ENCODE measurements at regions of chr5 and their contacts with region 1.

Region 1: DNA sequence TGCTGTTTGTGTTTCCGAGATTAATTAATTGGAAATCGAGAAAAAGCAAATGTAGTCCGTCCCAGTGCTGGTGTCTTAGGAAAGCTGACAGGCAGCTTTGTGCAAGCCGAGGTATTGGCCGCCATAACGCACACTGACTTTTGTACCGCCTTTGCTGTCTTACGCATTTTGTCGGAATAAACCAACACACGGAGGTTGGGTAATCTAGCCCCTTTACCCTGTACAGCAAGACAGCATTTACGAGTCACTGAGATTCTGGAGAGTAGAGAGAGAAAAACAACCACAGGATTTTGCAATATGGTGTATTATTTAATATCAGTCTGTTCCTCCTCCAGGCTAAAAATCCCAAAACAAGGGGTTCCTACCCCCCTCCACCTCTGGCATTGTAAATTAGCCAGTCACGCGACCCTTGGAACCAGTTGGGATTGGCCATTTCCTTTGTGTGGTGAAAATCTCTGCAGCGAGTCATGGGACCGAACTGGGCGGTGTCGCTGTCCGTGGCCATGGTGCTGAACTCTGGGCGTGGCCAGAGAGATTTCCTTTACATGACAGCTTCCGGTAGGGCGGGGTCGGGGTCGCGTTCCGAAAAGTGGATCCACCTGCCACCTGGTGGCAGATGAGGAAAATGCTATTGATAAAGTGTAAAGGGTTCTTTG is 10.3 kb upstream of the PCDHB1 start:
- DNase-seq: peak; percentile 87
- H3K4me3 ChIP-seq: peak overlapping the region; percentile 60 to 66
- H3K27ac ChIP-seq: peak overlapping the region; percentile 25 to 90; a peak in 3 of 4 replicates
- H3K4me1 ChIP-seq: peaks cover 0 to 7% of the 10 kb centered on the region in 2 experiments; a peak in 2 of 4 replicates
- H3K27me3 ChIP-seq: no peaks in the 10 kb centered on the region
- CTCF ChIP-seq: peak; percentile 84
- EP300 ChIP-seq: no peak
- RAD21 ChIP-seq: peak; percentile 95

Region 2: GRCh38 chr5:140785905-140786686 is 254.8 kb before region 1 on chr5 and contains the start of gene PCDHA1:
- CTCF ChIA-PET with region 1: interaction called, 17 read pairs
- POLR2A ChIA-PET with region 1: no interaction called
- DNase-seq: peak; percentile 36
- H3K4me3 ChIP-seq: peak within 1 kb of the TSS in 1 of 2 experiments; percentile 31; a peak in 2 of 4 replicates
- H3K27ac ChIP-seq: no peak within 1 kb of the TSS
- H3K4me1 ChIP-seq: no peaks in the 10 kb centered on the region
- H3K27me3 ChIP-seq: no peaks in the 10 kb centered on the region
- CTCF ChIP-seq: peak; percentile 29
- EP300 ChIP-seq: no peak
- RAD21 ChIP-seq: peak; percentile 47
- polyA plus RNA-seq, gene PCDHA1: 0.16 and 0.21 TPM in 2 replicates

Region 3: GRCh38 chr5:140855772-140856674 is 184.9 kb before region 1 on chr5 and contains the start of gene PCDHA10:
- CTCF ChIA-PET with region 1: interaction called, 63 read pairs
- POLR2A ChIA-PET with region 1: no interaction called
- DNase-seq: no peak
- H3K4me3 ChIP-seq: no peak within 1 kb of the TSS
- H3K27ac ChIP-seq: no peak within 1 kb of the TSS
- H3K4me1 ChIP-seq: no peaks in the 10 kb centered on the region
- H3K27me3 ChIP-seq: no peaks in the 10 kb centered on the region
- CTCF ChIP-seq: peak; percentile 13; the same call in 1 of the 2 replicates
- EP300 ChIP-seq: no peak
- RAD21 ChIP-seq: peak; percentile 40; the same call in 1 of the 2 replicates
- polyA plus RNA-seq, gene PCDHA10: 0.02 TPM in 2 replicates

Region 4: GRCh38 chr5:140875066-140876065 is 165.5 kb before region 1 on chr5 and contains the start of gene PCDHA12:
- CTCF ChIA-PET with region 1: interaction called, 89 read pairs
- POLR2A ChIA-PET with region 1: interaction called, 15 read pairs
- DNase-seq: peak; percentile 70
- H3K4me3 ChIP-seq: peak within 1 kb of the TSS; percentile 56 to 64
- H3K27ac ChIP-seq: peak within 1 kb of the TSS in 1 of 2 experiments; percentile 50; a peak in 2 of 4 replicates
- H3K4me1 ChIP-seq: no peaks in the 10 kb centered on the region; a peak in 2 of 4 replicates
- H3K27me3 ChIP-seq: no peaks in the 10 kb centered on the region
- CTCF ChIP-seq: peak; percentile 62
- EP300 ChIP-seq: no peak
- RAD21 ChIP-seq: peak; percentile 84
- polyA plus RNA-seq, gene PCDHA12: 0.54 and 0.70 TPM in 2 replicates

Region 5: GRCh38 chr5:140953234-140953633 is 87.7 kb before region 1 on chr5:
- CTCF ChIA-PET with region 1: interaction called, 13 read pairs
- POLR2A ChIA-PET with region 1: no interaction called
- DNase-seq: no peak
- H3K4me3 ChIP-seq: no peak overlapping the region
- H3K27ac ChIP-seq: no peak overlapping the region
- H3K4me1 ChIP-seq: no peaks in the 10 kb centered on the region
- H3K27me3 ChIP-seq: no peaks in the 10 kb centered on the region
- CTCF ChIP-seq: no peak
- EP300 ChIP-seq: no peak
- RAD21 ChIP-seq: no peak

Region 6: GRCh38 chr5:140982083-140982716 is 58.7 kb before region 1 on chr5:
- CTCF ChIA-PET with region 1: interaction called, 20 read pairs
- POLR2A ChIA-PET with region 1: interaction called, 4 read pairs
- DNase-seq: peak; percentile 47
- H3K4me3 ChIP-seq: no peak overlapping the region
- H3K27ac ChIP-seq: peak overlapping the region in 1 of 2 experiments; percentile 96; a peak in 2 of 4 replicates
- H3K4me1 ChIP-seq: peaks cover 9 to 31% of the 10 kb centered on the region in 2 experiments; a peak in 3 of 4 replicates
- H3K27me3 ChIP-seq: no peaks in the 10 kb centered on the region
- CTCF ChIP-seq: no peak
- EP300 ChIP-seq: peak in 1 of 2 experiments; percentile 80; a peak in 2 of 4 replicates
- RAD21 ChIP-seq: peak; percentile 41; the same call in 1 of the 2 replicates

Region 7: GRCh38 chr5:141017943-141018342 is 23.0 kb before region 1 on chr5:
- CTCF ChIA-PET with region 1: interaction called, 15 read pairs
- POLR2A ChIA-PET with region 1: interaction called, 3 read pairs
- DNase-seq: no peak
- H3K4me3 ChIP-seq: no peak overlapping the region
- H3K27ac ChIP-seq: no peak overlapping the region
- H3K4me1 ChIP-seq: no peaks in the 10 kb centered on the region
- H3K27me3 ChIP-seq: no peaks in the 10 kb centered on the region
- CTCF ChIP-seq: no peak
- EP300 ChIP-seq: no peak
- RAD21 ChIP-seq: no peak

Region 8: GRCh38 chr5:141121563-141121962 is 80.7 kb after region 1 on chr5 and contains the start of gene PCDHB4:
- CTCF ChIA-PET with region 1: no interaction called
- POLR2A ChIA-PET with region 1: no interaction called
- DNase-seq: peak; percentile 49
- H3K4me3 ChIP-seq: peak within 1 kb of the TSS; percentile 38 to 41
- H3K27ac ChIP-seq: no peak within 1 kb of the TSS; a peak in 1 of 4 replicates
- H3K4me1 ChIP-seq: peaks cover 0 to 2% of the 10 kb centered on the region in 2 experiments; a peak in 1 of 4 replicates
- H3K27me3 ChIP-seq: no peaks in the 10 kb centered on the region
- CTCF ChIP-seq: peak; percentile 51
- EP300 ChIP-seq: no peak
- RAD21 ChIP-seq: peak; percentile 70
- polyA plus RNA-seq, gene PCDHB4: 0.36 and 0.51 TPM in 2 replicates

Region 9: DNA sequence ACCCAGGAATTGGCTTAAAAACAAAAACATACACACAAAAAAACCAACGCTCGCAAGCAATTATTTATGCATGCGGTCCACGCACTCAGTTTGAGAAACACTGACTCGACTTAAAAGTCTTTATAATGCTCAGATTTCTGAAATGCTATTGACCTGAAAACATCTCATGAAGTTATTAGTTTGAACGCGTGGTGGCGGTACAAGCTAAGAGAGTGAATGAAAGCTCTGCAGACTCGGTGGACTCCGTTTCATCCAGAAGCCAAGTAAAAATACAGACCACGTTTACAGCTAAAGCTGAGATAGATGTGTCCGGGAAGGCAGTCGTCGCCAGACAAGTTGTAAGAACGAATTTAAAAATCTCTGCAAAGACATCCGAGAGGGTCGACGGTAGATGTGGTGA is 108.9 kb after region 1 on chr5 and contains the start of gene PCDHB6:
- CTCF ChIA-PET with region 1: no interaction called
- POLR2A ChIA-PET with region 1: no interaction called
- DNase-seq: peak; percentile 76
- H3K4me3 ChIP-seq: peak within 1 kb of the TSS; percentile 54 to 65
- H3K27ac ChIP-seq: peak within 1 kb of the TSS in 1 of 2 experiments; percentile 53; a peak in 1 of 4 replicates
- H3K4me1 ChIP-seq: no peaks in the 10 kb centered on the region
- H3K27me3 ChIP-seq: no peaks in the 10 kb centered on the region
- CTCF ChIP-seq: peak; percentile 56
- EP300 ChIP-seq: no peak
- RAD21 ChIP-seq: peak; percentile 73
- polyA plus RNA-seq, gene PCDHB6: 3.9 and 5.0 TPM in 2 replicates

Region 10: GRCh38 chr5:141272906-141273305 is 232.0 kb after region 1 on chr5:
- CTCF ChIA-PET with region 1: no interaction called
- POLR2A ChIA-PET with region 1: no interaction called
- DNase-seq: no peak
- H3K4me3 ChIP-seq: no peak overlapping the region
- H3K27ac ChIP-seq: no peak overlapping the region
- H3K4me1 ChIP-seq: no peaks in the 10 kb centered on the region
- H3K27me3 ChIP-seq: no peaks in the 10 kb centered on the region
- CTCF ChIP-seq: no peak
- EP300 ChIP-seq: no peak
- RAD21 ChIP-seq: no peak